ENCODE measurements at regions of chr12 and their contacts with region 1.

Region 1: DNA sequence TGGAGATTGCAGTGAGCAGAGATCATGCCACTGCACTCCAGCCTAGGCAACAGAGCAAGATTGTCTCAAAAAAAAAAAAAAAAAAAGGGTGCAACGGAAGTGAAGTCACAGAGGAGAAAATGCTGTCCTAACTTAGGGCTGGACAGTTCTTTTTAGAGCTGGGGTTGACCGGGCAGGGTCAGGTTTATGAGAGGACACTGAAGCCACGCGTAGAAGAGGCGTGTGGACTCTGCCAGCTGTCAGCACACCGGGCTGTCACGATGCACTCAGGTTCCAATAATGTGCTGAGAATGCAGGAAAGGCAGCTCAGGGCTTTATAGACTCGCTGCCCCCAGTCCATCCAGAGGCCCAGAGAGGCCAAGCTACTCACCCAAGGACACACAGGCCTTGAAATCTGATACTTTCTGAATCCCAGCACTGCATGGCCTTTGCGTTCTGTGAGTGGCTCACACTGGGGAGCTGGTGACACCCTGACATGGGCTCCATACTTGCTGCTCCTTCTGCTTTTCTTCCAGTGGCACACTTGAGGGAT is 28.9 kb upstream of the SPPL3 start:
- DNase-seq: no peak
- H3K4me3 ChIP-seq: no peak overlapping the region
- H3K27ac ChIP-seq: no peak overlapping the region
- H3K27me3 ChIP-seq: peaks cover 3% of the 10 kb centered on the region
- CTCF ChIP-seq: no peak

Region 2: DNA sequence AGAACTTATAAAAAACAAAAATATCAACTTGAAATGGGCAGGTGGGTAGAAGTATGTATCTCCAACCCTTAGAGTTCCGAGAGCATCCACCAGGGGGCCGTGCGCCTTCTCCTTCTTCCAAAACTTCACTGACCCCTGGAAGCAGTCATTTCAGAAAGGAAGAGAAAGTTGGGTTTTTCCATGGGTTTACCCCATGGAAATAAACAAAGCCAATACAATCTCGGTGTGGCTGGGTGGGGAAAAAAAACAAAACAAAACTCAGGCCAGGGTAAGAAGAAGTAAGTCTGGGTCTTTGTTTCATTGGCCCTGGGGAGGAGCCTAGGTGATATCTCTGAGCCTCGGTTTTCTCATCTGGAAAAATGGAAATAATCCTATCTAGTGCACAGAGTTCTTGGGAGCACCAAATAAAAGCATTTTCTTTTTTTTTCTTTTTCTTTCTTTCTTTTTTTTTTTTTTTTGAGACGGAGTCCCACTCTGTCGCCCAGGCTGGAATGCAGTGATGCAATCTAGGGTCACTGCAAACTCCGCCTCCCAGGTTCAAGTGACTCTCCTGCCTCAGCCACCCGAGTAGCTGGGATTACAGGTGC is 11.7 kb after region 1 on chr12:
- CTCF ChIA-PET with region 1: interaction called, 3 read pairs
- POLR2A ChIA-PET with region 1: interaction called, 11 read pairs
- DNase-seq: peak; percentile 10
- H3K4me3 ChIP-seq: no peak overlapping the region
- H3K27ac ChIP-seq: no peak overlapping the region
- H3K27me3 ChIP-seq: peaks cover 2% of the 10 kb centered on the region
- CTCF ChIP-seq: peak; percentile 83

Measured in AG04450 (cell line).